Heart left ventricle (tissue), 16 donors: ENCODE measurements at regions of chr13 and their contacts with region 1.

Region 1: GRCh38 chr13:90502153-90502552 is 845.3 kb upstream of the MIR17HG start:
- DNase-seq: peak in 4 of 5 donors; percentile 59 to 77 (median 69)
- ATAC-seq: peak; percentile 95 to 99 (median 98)
- H3K4me3 ChIP-seq: no peak overlapping the region
- H3K27ac ChIP-seq: peak overlapping the region in 7 of 12 donors; percentile 30 to 62 (median 35)
- H3K4me1 ChIP-seq: peaks cover 0 to 19% (median 0%) of the 10 kb centered on the region in 12 donors
- H3K27me3 ChIP-seq: no peaks in the 10 kb centered on the region
- CTCF ChIP-seq: no peak
- POLR2A ChIP-seq: no peak

Region 2: GRCh38 chr13:90201202-90201601 is 301.0 kb before region 1 on chr13:
- intact Hi-C with region 1: loop called in 1 of 10 experiments (anchors 5 kb)
- DNase-seq: peak in 2 of 5 donors; percentile 29 to 52
- ATAC-seq: peak; percentile 83 to 87 (median 84)
- H3K4me3 ChIP-seq: no peak overlapping the region
- H3K27ac ChIP-seq: peak overlapping the region in 4 of 12 donors; percentile 8 to 57 (median 30)
- H3K4me1 ChIP-seq: peaks cover 0 to 12% (median 4%) of the 10 kb centered on the region in 12 donors
- H3K27me3 ChIP-seq: no peaks in the 10 kb centered on the region
- CTCF ChIP-seq: no peak
- POLR2A ChIP-seq: no peak

Region 3: DNA sequence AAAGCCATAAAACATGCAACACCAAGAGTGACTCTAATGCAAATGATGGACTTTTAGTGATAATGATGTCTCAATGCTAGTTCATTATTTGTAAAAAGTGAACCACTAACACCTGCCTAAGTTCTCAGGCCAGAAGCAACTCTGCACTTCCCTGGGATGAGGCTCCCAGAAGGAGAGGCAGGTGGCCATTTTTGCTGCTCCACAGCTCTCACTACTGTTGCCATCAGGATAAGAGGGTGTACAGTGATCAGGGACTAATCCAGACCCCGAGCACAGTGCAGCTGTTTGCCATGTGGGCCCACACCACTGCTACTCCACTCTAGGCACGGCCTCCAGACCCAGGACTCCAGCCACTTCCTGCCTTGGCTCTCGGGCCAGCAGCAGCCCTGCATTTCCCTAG is 17.0 kb after region 1 on chr13:
- intact Hi-C with region 1: no loop called
- DNase-seq: peak in 1 of 5 donors; percentile 36
- ATAC-seq: no peak
- H3K4me3 ChIP-seq: no peak overlapping the region
- H3K27ac ChIP-seq: no peak overlapping the region
- H3K4me1 ChIP-seq: no peaks in the 10 kb centered on the region
- H3K27me3 ChIP-seq: no peaks in the 10 kb centered on the region
- CTCF ChIP-seq: no peak
- POLR2A ChIP-seq: no peak

Region 4: GRCh38 chr13:90534617-90535370 is 32.6 kb after region 1 on chr13:
- intact Hi-C with region 1: loop called in 1 of 10 experiments (anchors 5 kb)
- DNase-seq: no peak
- ATAC-seq: peak in 3 of 4 donors; percentile 50 to 88 (median 61)
- H3K4me3 ChIP-seq: no peak overlapping the region
- H3K27ac ChIP-seq: peak overlapping the region in 4 of 12 donors; percentile 5 to 51 (median 24)
- H3K4me1 ChIP-seq: peaks cover 0 to 5% (median 0%) of the 10 kb centered on the region in 12 donors
- H3K27me3 ChIP-seq: no peaks in the 10 kb centered on the region
- CTCF ChIP-seq: no peak
- POLR2A ChIP-seq: no peak

Region 5: GRCh38 chr13:90717451-90717936 is 215.3 kb after region 1 on chr13:
- intact Hi-C with region 1: no loop called
- DNase-seq: no peak
- ATAC-seq: peak in 1 of 4 donors; percentile 65
- H3K4me3 ChIP-seq: no peak overlapping the region
- H3K27ac ChIP-seq: no peak overlapping the region
- H3K4me1 ChIP-seq: peaks cover 0 to 13% (median 0%) of the 10 kb centered on the region in 12 donors
- H3K27me3 ChIP-seq: no peaks in the 10 kb centered on the region
- CTCF ChIP-seq: no peak
- POLR2A ChIP-seq: no peak

Region 6: DNA sequence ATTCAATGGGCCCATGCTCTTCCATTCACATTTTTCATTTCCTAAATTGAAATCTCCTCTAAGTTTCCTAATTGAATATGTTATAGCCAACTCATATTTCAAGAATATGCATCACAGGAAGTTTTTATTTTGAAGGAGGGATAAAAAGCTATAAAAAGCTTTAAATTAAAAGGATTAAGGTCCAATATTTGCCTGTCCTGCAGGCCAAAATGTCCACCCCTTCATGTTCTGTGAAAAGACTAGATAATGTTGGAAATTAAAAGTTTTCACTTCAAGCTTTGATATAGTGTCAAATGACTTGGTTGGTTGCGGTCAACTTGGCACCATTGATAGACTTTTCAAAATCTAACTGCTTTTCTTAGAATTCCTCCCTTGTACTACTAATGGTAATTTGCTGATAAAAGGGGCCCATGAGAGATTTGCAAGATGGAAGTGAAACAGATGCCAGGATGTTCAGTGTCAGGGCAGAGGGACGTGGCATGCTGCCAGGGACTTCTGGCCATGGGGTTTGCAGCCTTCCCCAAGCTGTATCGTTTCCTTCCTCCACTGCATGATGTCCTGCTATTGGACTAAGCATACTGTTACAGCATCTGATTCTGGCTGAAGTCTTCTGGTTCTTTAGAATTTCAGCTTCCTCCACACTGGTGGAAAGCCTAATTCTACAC is 298.1 kb after region 1 on chr13:
- intact Hi-C with region 1: no loop called
- DNase-seq: peak; percentile 51 to 83 (median 68)
- ATAC-seq: peak; percentile 42 to 84 (median 76)
- H3K4me3 ChIP-seq: no peak overlapping the region
- H3K27ac ChIP-seq: peak overlapping the region in 1 of 12 donors; percentile 43
- H3K4me1 ChIP-seq: peaks cover 0 to 13% (median 0%) of the 10 kb centered on the region in 12 donors
- H3K27me3 ChIP-seq: no peaks in the 10 kb centered on the region
- CTCF ChIP-seq: no peak
- POLR2A ChIP-seq: no peak